Right ventricle myocardium inferior (tissue), 1 donor: ENCODE measurements at regions of chr13 and their contacts with region 1.

Region 1: DNA sequence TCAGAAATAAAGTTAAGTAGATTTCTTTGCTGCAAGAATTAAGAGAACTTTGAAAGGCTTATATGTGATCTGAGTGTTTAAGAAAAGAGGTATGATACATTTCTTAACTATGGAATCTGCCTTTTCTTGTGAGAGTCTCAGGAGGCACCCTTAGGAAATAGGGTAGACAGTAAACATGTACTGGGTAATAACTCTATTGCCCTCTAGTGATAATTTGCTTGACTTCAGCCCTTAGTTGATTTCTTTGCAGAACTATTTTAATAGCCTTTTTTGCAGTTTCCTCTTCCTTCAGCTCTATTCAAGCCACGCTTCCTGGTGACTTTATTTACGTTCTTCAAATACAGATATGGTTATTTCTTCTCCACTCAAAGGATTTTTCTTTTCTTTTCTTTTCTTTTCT is 37.0 kb upstream of the CCNA1 start:
- DNase-seq: no peak
- ATAC-seq: no peak

Region 2: DNA sequence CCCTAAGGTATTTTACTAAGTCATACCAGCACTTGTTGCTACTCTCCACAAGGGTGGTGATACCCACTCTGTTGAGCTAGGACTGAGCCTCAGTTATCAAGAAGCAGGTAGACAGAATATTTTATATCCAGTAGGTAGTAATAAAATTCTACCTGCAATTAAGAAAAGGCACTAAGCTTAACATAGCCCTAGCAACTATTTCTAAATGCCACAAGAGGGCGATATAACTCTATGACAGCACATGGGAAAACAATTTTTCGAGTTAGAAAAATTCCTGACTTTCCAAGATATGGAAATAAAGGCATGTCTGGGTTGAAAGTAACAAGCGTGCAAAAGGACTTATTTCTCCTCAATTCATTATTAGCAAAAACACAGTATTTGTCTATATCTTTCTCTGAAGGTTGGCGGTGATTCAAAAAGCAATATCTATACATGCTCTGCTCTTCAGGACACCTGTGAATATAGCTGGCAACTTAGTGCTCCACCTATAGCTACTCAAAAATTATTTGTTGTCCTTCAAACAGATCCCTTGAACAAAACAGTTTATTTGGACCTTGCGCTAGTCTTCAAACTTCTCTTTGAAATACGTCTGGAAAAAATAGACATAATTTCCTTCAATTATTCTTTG is 112.3 kb before region 1 on chr13:
- intact Hi-C with region 1: loop called (anchors 5 kb)
- DNase-seq: no peak
- ATAC-seq: no peak

Region 3: GRCh38 chr13:36453516-36453915 is 58.2 kb after region 1 on chr13:
- intact Hi-C with region 1: no loop called
- DNase-seq: no peak
- ATAC-seq: peak; percentile 67